Activated T-helper 2 cell treated with anti-CD3 and anti-CD28 coated beads, Interferon-gamma antibody, Interleukin-2, Interleukin-4, amounts not matched to agents 10 μg/mL and 5 μg/mL and 100 μg/mL, durations not matched to agents 14 hours and 24 hours and 36 hours (primary cell): ENCODE measurements at regions of chr10 and their contacts with region 1.

Region 1: DNA sequence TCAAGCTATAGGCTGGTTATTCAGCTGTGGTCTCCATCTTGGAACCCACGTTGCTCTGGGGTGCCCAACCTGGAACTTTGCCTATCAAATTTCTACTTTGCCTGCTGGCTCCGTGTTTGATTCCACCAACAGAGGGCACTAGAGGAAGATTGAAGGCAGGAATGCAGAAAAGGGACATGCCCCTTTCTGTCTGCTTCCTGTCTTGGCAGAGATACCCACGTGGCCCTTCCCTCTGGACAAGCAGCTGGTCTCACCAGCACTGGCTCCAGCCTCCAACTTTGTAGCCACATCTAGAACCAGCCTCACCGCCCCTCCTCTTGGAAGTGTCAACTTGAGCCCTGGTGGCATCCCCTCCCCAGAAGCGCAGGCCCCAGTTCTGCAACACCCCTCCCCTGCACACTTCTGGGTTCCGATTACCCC is 52.1 kb upstream of the ZNF438 start:
- DNase-seq: peak; percentile 55
- H3K4me3 Mint-ChIP-seq: no peak overlapping the region
- H3K27ac Mint-ChIP-seq: no peak overlapping the region
- H3K4me1 Mint-ChIP-seq: peaks cover 13% of the 10 kb centered on the region
- H3K27me3 Mint-ChIP-seq: no peaks in the 10 kb centered on the region

Region 2: DNA sequence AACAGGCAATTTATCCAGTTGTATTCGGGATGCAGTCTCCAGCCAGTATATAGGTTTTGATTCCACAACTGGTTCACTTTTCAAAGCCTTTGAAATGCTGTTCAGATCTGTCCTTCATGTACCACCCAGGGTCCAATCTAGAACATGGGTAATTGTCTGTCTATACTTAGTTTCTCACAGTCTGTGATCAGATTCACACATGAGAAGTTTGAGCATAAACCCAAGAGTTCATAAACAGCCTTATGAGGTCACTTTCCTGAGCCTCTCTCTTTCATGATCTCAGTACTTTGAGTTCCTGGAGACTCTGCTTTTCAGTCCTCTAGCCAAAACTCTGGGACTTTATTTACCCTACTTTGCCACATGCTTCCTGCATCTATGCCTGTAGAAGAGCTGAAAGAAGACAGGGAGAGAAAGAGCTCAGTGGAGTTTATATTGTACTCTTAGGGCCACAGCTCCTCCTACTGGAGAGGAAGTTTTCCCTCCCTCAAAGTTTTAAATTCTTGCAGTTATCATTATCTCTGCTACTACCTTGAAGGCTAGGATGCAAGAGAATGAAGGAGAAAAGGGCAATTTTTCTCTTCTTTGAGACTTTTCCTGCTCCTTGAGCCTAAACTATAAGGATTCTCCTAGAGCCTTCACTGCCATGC is 407.2 kb after region 1 on chr10:
- intact Hi-C with region 1: loop called (anchors 5 kb)
- DNase-seq: no peak
- H3K4me3 Mint-ChIP-seq: no peak overlapping the region
- H3K27ac Mint-ChIP-seq: no peak overlapping the region
- H3K4me1 Mint-ChIP-seq: peaks cover 8% of the 10 kb centered on the region
- H3K27me3 Mint-ChIP-seq: no peaks in the 10 kb centered on the region

Region 3: GRCh38 chr10:31808258-31809218 is 724.8 kb after region 1 on chr10:
- intact Hi-C with region 1: loop called (anchors 5 kb)
- DNase-seq: peak; percentile 11
- H3K4me3 Mint-ChIP-seq: peak overlapping the region; percentile 76
- H3K27ac Mint-ChIP-seq: peak overlapping the region; percentile 84
- H3K4me1 Mint-ChIP-seq: peaks cover 7% of the 10 kb centered on the region
- H3K27me3 Mint-ChIP-seq: no peaks in the 10 kb centered on the region